Calu3 (cell line): ENCODE measurements at regions of chr1 and their contacts with region 1.

Region 1: DNA sequence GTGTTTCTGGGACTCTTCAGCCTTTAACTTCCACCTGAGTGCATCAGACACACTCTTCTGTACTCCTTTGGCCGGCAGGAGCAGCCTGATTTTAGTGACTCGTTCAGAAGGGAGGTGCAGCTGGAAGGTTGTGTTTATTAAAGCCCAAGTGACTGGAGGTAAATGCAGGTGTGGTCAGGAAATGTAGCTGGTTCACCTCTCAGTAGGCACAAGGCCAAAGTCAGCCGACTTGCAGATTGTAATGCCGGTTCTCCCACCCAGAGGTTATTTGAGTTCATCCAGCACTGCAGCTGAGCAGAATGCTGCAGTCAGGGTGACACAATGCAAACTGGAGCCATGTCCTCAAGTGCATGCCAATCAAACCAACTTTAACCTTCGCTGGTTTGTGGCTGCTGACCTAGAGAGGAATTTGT is 91.5 kb downstream of the SPATA46 start:
- DNase-seq: peak; percentile 84
- H3K4me3 Mint-ChIP-seq: peak overlapping the region; percentile 2
- H3K27ac Mint-ChIP-seq: no peak overlapping the region
- H3K4me1 Mint-ChIP-seq: peaks cover 25% of the 10 kb centered on the region
- H3K27me3 Mint-ChIP-seq: no peaks in the 10 kb centered on the region
- CTCF ChIP-seq: no peak

Region 2: GRCh38 chr1:162159515-162159914 is 125.6 kb before region 1 on chr1:
- CTCF ChIA-PET with region 1: no interaction called
- intact Hi-C with region 1: no loop called
- DNase-seq: peak; percentile 60
- H3K4me3 Mint-ChIP-seq: no peak overlapping the region
- H3K27ac Mint-ChIP-seq: no peak overlapping the region
- H3K4me1 Mint-ChIP-seq: peaks cover 19% of the 10 kb centered on the region
- H3K27me3 Mint-ChIP-seq: no peaks in the 10 kb centered on the region
- CTCF ChIP-seq: no peak

Region 3: GRCh38 chr1:162349635-162350330 is 64.6 kb after region 1 on chr1:
- CTCF ChIA-PET with region 1: no interaction called
- intact Hi-C with region 1: loop called (anchors 5 kb)
- DNase-seq: peak; percentile 17
- H3K4me3 Mint-ChIP-seq: peak overlapping the region; percentile 7
- H3K27ac Mint-ChIP-seq: peak overlapping the region; percentile 45
- H3K4me1 Mint-ChIP-seq: peaks cover 51% of the 10 kb centered on the region
- H3K27me3 Mint-ChIP-seq: no peaks in the 10 kb centered on the region
- CTCF ChIP-seq: no peak